ENCODE measurements at regions of chr3 and their contacts with region 1.

Region 1: DNA sequence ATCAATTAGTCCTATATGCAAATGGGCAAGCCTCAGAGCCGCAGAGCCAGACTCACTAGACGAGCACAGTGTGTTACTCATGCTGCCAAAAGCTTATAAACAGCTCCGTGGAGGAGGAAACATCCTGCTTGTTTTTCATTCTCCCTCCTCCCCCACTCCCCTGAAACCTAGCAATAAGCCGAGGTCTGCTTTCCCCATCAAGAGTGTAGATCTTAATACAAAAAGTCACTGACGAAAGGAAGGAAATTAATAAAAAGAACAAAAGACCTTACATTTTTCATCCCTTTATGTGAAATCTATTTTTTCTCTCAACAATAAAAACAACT is 88.5 kb downstream of the XXYLT1 start:
- DNase-seq: peak; percentile 38
- ATAC-seq: peak; percentile 73
- H3K4me3 Mint-ChIP-seq: no peak overlapping the region
- H3K27ac Mint-ChIP-seq: peak overlapping the region; percentile 57
- H3K4me1 Mint-ChIP-seq: peaks cover 63% of the 10 kb centered on the region
- H3K27me3 Mint-ChIP-seq: no peaks in the 10 kb centered on the region

Region 2: DNA sequence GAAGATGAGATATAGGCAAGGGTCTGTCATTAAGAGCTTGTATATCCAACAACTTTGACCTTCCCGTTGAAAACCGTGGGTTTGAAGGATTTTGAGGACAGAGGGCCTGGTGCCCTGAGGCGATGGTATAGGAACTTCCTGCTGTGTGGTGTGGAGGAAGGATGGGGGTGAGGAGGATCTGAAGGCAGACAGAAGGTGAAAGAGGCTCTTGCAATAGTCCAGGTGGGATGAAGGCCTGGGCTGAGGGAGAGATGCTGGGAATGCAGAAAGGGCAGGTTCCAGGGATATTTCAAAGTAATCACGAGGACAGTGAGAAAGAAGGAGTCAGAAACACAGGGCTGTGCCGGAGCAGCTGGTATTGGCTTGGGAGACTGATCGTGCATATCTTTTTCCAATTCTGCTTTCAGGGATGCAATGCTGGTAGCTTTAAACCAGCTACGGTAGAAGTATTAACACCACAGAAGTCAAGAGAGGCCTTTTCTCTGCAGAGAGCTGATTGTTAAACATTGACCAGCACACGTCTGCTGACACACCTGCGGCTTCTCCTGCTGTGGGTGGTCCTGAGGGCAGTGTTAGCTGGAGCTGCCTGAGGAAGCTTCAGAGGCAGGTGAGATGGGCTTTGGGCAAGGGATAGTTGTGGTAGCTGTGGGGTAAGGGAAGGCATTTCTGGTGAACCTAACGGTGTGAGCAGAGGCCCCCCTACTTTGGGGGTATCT is 475.8 kb before region 1 on chr3:
- CTCF ChIA-PET with region 1: no interaction called
- POLR2A ChIA-PET with region 1: no interaction called
- intact Hi-C with region 1: no loop called
- DNase-seq: no peak
- ATAC-seq: no peak
- H3K4me3 Mint-ChIP-seq: no peak overlapping the region
- H3K27ac Mint-ChIP-seq: no peak overlapping the region
- H3K4me1 Mint-ChIP-seq: no peaks in the 10 kb centered on the region
- H3K27me3 Mint-ChIP-seq: no peaks in the 10 kb centered on the region

Region 3: DNA sequence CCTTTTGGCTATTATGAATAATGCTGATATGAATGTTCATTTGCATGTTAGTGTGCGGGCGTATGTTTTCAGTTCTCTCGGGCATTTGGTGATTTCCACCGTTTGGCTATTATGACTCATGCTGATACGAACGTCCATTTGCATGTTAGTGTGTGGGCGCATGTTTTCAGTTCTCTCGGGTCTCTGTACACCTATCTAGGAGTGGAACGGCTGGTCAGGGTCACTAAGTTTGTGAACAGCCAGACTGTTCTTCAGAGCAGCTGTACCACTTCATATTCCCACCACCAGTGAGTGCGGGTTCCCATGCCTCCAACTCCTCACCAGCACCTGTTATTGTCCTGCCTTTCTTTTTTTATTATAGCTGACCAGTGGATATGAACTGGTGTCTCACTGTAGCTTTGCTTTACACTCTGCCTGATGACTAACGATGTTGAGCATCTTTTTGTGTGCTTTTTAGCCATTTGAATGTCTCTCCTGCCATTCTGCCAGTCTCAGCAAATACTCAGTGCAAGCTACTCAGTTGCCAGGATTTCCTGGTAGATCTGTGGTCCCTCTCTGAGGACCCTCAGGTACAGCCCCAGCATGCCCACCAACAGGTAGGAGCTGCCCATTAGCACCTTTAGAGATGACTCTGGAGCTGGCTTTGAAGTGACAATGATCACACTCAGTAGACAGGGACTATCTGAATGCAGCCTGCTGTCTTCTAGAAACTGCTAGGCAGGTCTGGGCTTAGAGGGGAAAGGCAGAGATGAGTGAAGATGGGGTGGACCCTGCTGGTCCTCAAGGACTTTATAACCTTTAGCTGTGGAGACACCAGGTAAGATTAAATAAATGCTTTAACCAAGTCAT is 52.6 kb before region 1 on chr3:
- CTCF ChIA-PET with region 1: no interaction called
- POLR2A ChIA-PET with region 1: interaction called, 4 read pairs
- intact Hi-C with region 1: loop called (anchors 2 to 5 kb)
- DNase-seq: peak; percentile 64
- ATAC-seq: peak; percentile 67
- H3K4me3 Mint-ChIP-seq: peak overlapping the region; percentile 54
- H3K27ac Mint-ChIP-seq: peak overlapping the region; percentile 90
- H3K4me1 Mint-ChIP-seq: peaks cover 39% of the 10 kb centered on the region
- H3K27me3 Mint-ChIP-seq: no peaks in the 10 kb centered on the region